ENCODE measurements at regions of chr2 and their contacts with region 1.

Region 1: DNA sequence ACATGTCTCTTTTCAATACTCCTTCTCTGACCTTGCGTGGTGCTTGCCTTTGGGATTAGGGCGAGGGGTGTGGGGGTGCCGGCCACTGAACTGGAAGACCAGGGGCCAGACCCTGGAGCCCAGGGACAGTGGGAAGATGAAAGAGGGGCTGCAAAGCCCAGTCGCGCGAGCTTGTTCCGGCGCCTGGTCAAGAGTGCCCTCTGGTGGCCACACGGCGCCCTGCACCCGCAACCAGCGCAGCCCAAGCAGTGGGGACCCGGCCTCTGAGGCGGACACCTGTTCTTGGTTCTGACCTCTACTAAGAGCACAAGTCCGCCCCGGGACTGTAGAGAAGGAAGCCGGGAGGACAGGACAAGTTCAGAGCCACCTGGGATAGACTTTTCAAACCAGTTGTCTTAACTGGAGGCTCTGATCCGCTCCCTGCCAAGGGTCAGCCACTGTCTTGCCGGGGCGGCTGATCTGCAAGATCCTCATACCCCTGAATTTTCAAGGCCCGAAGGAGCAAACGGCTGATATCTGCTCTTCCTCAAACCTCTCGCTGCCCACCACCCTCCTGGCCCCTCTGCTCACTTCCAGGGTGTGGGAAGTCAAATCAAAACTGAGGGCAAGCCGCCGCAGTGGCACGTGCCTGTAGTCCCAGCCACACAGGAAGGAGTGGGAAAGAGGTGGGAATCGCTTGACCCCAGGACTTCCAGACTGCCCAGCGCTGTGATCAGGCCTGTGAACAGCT is 14.9 kb upstream of the MSH6 start:
- DNase-seq: peak; percentile 63
- H3K4me3 ChIP-seq: no peak overlapping the region
- H3K27ac ChIP-seq: no peak overlapping the region
- H3K4me1 ChIP-seq: no peaks in the 10 kb centered on the region
- H3K27me3 ChIP-seq: no peaks in the 10 kb centered on the region
- CTCF ChIP-seq: peak; percentile 95 to 99
- POLR2A ChIP-seq: no peak

Region 2: DNA sequence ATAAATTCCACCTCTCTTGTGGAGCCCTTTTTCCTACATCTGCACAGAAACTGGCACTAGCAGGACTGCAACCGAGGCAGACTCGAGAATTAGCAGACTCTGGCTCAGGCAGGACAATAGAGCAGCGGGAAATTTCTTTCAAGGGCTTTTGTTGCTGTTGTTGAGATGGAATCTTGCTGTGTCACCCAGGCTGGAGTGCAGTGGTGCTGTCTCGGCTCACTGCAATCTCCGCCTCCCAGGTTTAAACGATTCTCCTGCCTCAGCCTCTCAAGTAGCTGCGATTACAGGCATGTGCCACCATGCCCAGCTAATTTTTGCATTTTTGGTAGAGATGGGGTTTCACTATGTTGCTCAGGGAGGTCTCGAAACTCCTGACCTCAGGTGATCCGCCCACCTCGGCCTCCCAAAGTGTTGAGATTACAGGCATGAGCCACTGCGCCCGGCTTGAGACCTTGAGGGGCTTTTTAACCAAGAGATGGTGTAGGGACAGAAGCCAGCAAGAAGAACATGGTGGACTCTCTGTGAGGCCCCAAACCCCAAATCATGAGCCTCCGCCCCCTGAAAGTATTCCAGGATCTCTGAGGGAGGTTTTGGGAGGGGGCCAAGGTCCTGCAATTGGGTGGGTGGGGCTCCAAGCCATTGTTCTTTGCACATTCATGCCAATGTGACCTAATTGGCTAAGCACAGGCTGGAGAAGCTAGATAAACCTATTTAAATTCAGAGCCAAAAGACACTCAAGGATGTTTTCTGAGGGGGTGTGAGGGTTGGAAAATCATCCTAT is 433.5 kb before region 1 on chr2:
- CTCF ChIA-PET with region 1: interaction called, 138 read pairs
- POLR2A ChIA-PET with region 1: no interaction called
- dilution Hi-C with region 1: no loop called
- intact Hi-C with region 1: loop called (anchors 1 kb)
- DNase-seq: peak; percentile 52
- H3K4me3 ChIP-seq: no peak overlapping the region
- H3K27ac ChIP-seq: no peak overlapping the region
- H3K4me1 ChIP-seq: no peaks in the 10 kb centered on the region
- H3K27me3 ChIP-seq: no peaks in the 10 kb centered on the region
- CTCF ChIP-seq: no peak
- POLR2A ChIP-seq: no peak

Region 3: GRCh38 chr2:47344890-47345589 is 423.0 kb before region 1 on chr2:
- CTCF ChIA-PET with region 1: interaction called, 10 read pairs
- POLR2A ChIA-PET with region 1: no interaction called
- dilution Hi-C with region 1: no loop called
- intact Hi-C with region 1: no loop called
- DNase-seq: peak; percentile 93
- H3K4me3 ChIP-seq: peak overlapping the region; percentile 43 to 70 (median 63)
- H3K27ac ChIP-seq: peak overlapping the region; percentile 84
- H3K4me1 ChIP-seq: peaks cover 15% of the 10 kb centered on the region
- H3K27me3 ChIP-seq: no peaks in the 10 kb centered on the region
- CTCF ChIP-seq: peak in 1 of 2 donors; percentile 16
- POLR2A ChIP-seq: peak; percentile 91

Region 4: DNA sequence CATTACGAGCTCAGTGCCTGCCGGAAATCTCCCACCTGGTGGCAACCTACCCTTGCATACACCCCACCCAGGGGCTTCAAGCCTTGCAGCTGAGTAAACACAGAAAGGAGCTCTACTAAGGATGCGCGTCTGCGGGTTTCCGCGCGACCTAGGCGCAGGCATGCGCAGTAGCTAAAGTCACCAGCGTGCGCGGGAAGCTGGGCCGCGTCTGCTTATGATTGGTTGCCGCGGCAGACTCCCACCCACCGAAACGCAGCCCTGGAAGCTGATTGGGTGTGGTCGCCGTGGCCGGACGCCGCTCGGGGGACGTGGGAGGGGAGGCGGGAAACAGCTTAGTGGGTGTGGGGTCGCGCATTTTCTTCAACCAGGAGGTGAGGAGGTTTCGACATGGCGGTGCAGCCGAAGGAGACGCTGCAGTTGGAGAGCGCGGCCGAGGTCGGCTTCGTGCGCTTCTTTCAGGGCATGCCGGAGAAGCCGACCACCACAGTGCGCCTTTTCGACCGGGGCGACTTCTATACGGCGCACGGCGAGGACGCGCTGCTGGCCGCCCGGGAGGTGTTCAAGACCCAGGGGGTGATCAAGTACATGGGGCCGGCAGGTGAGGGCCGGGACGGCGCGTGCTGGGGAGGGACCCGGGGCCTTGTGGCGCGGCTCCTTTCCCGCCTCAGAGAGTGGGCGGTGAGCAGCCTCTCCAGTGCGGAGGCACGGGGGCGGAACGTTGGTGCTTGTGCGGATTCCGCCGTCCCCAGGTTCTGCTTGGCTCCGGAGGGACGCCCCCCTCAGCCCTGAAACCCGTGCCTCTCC is 365.0 kb before region 1 on chr2 and contains the start of gene MSH2:
- CTCF ChIA-PET with region 1: interaction called, 12 read pairs
- POLR2A ChIA-PET with region 1: no interaction called
- dilution Hi-C with region 1: no loop called
- intact Hi-C with region 1: no loop called
- DNase-seq: peak; percentile 96
- H3K4me3 ChIP-seq: peak within 1 kb of the TSS; percentile 46 to 80 (median 76)
- H3K27ac ChIP-seq: peak within 1 kb of the TSS; percentile 44
- H3K4me1 ChIP-seq: peaks cover 14% of the 10 kb centered on the region
- H3K27me3 ChIP-seq: no peaks in the 10 kb centered on the region
- CTCF ChIP-seq: no peak
- POLR2A ChIP-seq: peak; percentile 78
- total RNA-seq, gene MSH2: 28.0 and 30.5 TPM in 2 replicates

Region 5: DNA sequence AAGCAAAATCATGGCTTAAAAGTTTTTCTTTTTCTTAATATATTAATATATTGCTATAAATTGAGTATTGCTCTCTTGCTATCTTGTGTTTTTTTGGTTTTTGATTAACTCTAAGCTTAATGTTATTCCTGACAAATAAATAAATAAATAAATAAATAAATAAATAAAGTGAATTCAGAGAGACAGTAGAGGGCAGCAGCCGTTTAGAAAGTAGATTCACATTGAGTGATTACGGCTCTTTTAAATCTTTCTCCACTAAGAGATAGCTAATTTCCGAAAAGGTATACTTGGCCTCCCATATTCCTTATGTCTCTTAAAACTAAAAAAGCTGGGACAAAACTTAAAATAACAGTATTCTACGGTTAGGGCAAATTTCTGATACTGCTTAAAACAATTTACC is 330.8 kb before region 1 on chr2:
- CTCF ChIA-PET with region 1: interaction called, 331 read pairs
- POLR2A ChIA-PET with region 1: no interaction called
- dilution Hi-C with region 1: no loop called
- intact Hi-C with region 1: loop called (anchors 1 kb)
- DNase-seq: peak; percentile 48
- H3K4me3 ChIP-seq: no peak overlapping the region
- H3K27ac ChIP-seq: no peak overlapping the region
- H3K4me1 ChIP-seq: no peaks in the 10 kb centered on the region
- H3K27me3 ChIP-seq: no peaks in the 10 kb centered on the region
- CTCF ChIP-seq: no peak
- POLR2A ChIP-seq: no peak

Region 6: DNA sequence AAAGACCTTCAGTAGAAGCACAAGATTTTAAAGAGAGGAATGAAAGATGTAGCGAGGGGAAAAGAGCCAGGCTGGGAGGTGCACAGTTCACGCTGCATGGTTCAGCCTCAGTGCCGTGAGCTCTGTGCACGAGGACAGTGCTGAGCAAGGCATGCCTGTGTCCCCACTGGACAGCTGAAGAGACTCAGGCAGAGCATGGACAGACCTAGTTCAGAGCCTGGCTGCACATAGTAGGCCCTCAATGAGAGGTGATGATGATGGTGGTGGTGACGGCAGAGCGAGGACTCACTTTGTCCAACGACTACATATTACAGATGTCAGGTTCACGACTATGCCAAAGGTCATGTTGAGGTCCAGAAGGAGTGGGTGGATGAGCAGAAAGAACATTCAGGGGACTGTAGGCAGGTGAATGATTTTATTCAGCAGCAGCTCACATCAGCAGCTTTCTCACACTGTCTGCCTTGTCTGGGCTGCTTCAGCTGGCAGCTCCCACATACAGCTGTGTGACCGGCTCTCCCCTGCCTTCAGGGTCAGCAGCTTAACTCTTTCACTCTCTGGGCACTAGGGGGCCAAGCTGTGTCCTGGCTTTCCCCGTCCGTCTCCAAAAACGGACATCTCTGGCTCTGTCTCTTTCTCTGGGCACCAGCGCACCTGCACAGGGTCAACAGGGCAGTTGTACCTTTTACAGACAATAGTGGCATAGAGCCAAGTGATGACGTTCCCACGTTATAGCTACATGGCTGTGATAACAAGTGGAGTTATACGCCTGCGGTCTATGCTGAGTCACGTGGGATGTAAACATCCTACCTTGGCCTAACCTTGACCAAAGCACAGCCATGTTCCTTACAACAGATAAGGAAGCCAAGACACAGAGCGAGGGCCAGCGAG is 113.9 kb before region 1 on chr2:
- CTCF ChIA-PET with region 1: interaction called, 45 read pairs
- POLR2A ChIA-PET with region 1: no interaction called
- dilution Hi-C with region 1: no loop called
- intact Hi-C with region 1: loop called (anchors 1 kb)
- DNase-seq: no peak
- H3K4me3 ChIP-seq: no peak overlapping the region
- H3K27ac ChIP-seq: no peak overlapping the region
- H3K4me1 ChIP-seq: no peaks in the 10 kb centered on the region
- H3K27me3 ChIP-seq: peaks cover 0 to 2% of the 10 kb centered on the region in 2 experiments
- CTCF ChIP-seq: peak; percentile 50 to 51
- POLR2A ChIP-seq: no peak

Region 7: DNA sequence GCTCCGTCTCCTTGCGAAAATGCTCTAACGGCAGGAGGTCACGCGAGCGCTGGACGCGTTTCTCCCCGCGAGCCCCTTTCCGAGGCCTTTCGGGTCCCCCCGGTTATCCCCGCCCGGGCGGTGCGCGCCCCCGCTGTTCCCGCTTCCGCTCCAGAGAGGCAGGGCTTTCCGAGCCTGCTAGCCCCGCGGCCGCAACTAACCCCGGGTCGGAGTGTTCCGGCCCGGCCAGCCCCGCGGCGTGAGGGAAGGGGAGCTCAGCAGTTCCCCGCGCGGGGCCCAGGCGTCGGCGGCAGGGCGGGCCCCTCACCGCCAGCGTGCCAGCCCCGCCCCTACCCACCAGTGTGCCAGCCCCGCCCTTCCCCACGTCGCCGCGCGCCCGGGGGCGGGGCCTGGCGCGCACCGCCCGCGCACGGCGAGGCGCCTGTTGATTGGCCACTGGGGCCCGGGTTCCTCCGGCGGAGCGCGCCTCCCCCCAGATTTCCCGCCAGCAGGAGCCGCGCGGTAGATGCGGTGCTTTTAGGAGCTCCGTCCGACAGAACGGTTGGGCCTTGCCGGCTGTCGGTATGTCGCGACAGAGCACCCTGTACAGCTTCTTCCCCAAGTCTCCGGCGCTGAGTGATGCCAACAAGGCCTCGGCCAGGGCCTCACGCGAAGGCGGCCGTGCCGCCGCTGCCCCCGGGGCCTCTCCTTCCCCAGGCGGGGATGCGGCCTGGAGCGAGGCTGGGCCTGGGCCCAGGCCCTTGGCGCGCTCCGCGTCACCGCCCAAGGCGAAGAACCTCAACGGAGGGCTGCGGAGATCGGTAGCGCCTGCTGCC is 14.8 kb after region 1 on chr2 and contains the start of gene MSH6:
- CTCF ChIA-PET with region 1: interaction called, 16 read pairs
- POLR2A ChIA-PET with region 1: interaction called, 3 read pairs
- dilution Hi-C with region 1: no loop called
- intact Hi-C with region 1: no loop called
- DNase-seq: peak; percentile 90
- H3K4me3 ChIP-seq: peak within 1 kb of the TSS; percentile 64 to 92 (median 89)
- H3K27ac ChIP-seq: peak within 1 kb of the TSS; percentile 77
- H3K4me1 ChIP-seq: peaks cover 9% of the 10 kb centered on the region
- H3K27me3 ChIP-seq: no peaks in the 10 kb centered on the region
- CTCF ChIP-seq: no peak
- POLR2A ChIP-seq: peak; percentile 71
- total RNA-seq, gene MSH6: 59.3 and 74.0 TPM in 2 replicates

Measured in endothelial cell of umbilical vein (primary cell).